ENCODE measurements at regions of chr6 and their contacts with region 1.

Region 1: GRCh38 chr6:120826253-120826652 is 508.0 kb downstream of the TBC1D32 start:
- DNase-seq: peak; percentile 27
- H3K4me3 ChIP-seq: no peak overlapping the region
- H3K27ac ChIP-seq: no peak overlapping the region
- H3K4me1 ChIP-seq: no peaks in the 10 kb centered on the region
- H3K27me3 ChIP-seq: no peaks in the 10 kb centered on the region
- CTCF ChIP-seq: peak; percentile 43

Region 2: GRCh38 chr6:119742188-119742803 is 1084.0 kb before region 1 on chr6:
- intact Hi-C with region 1: loop called (anchors 10 kb)
- DNase-seq: peak; percentile 63
- H3K4me3 ChIP-seq: no peak overlapping the region
- H3K27ac ChIP-seq: no peak overlapping the region
- H3K4me1 ChIP-seq: no peaks in the 10 kb centered on the region
- H3K27me3 ChIP-seq: no peaks in the 10 kb centered on the region
- CTCF ChIP-seq: peak; percentile 71

Region 3: GRCh38 chr6:120405947-120406346 is 420.3 kb before region 1 on chr6:
- intact Hi-C with region 1: loop called (anchors 5 kb)
- DNase-seq: no peak
- H3K4me3 ChIP-seq: no peak overlapping the region
- H3K27ac ChIP-seq: no peak overlapping the region
- H3K4me1 ChIP-seq: no peaks in the 10 kb centered on the region
- H3K27me3 ChIP-seq: no peaks in the 10 kb centered on the region
- CTCF ChIP-seq: no peak

Measured in colonic mucosa (tissue), 4 donors.